ENCODE measurements at regions of chr16 and their contacts with region 1.

Region 1: DNA sequence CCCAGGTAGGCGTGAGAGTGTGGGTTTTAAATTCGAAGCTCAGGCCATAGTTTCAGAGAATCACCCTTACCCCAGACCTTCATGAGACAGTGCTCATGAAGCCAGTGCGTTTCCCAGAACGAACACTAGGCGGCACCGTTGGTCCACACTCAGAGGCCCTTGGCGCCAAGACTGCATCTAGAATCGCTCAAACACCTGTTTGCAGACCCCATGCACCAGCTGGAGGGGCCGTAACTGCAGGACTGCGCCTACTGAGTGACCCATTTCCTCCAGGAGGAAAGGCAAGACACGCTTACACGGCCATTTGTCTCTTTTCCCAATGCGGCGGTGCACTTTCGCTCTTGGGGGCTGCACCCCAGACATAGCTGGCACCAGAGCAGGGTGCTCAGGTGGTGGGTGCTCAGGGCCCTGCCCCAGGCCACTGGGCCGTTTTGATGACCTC is 34.0 kb downstream of the ADGRG5 start:
- DNase-seq: peak; percentile 91
- ATAC-seq: peak; percentile 82
- H3K4me3 Mint-ChIP-seq: no peak overlapping the region
- H3K27ac Mint-ChIP-seq: no peak overlapping the region
- H3K4me1 Mint-ChIP-seq: peaks cover 33% of the 10 kb centered on the region
- H3K27me3 Mint-ChIP-seq: peaks cover 5% of the 10 kb centered on the region

Region 2: DNA sequence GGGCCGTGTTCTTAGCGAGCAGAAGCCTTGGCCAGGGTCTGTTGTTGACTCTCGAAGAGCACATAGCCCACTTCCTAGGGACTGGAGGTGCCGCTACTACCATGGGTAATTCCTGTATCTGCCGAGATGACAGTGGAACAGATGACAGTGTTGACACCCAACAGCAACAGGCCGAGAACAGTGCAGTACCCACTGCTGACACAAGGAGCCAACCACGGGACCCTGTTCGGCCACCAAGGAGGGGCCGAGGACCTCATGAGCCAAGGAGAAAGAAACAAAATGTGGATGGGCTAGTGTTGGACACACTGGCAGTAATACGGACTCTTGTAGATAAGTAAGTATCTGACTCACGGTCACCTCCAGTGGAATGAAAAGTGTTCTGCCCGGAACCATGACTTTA is 371.8 kb before region 1 on chr16:
- CTCF ChIA-PET with region 1: no interaction called
- POLR2A ChIA-PET with region 1: no interaction called
- intact Hi-C with region 1: no loop called
- DNase-seq: peak; percentile 7
- ATAC-seq: no peak
- H3K4me3 Mint-ChIP-seq: no peak overlapping the region
- H3K27ac Mint-ChIP-seq: no peak overlapping the region
- H3K4me1 Mint-ChIP-seq: no peaks in the 10 kb centered on the region
- H3K27me3 Mint-ChIP-seq: no peaks in the 10 kb centered on the region

Region 3: DNA sequence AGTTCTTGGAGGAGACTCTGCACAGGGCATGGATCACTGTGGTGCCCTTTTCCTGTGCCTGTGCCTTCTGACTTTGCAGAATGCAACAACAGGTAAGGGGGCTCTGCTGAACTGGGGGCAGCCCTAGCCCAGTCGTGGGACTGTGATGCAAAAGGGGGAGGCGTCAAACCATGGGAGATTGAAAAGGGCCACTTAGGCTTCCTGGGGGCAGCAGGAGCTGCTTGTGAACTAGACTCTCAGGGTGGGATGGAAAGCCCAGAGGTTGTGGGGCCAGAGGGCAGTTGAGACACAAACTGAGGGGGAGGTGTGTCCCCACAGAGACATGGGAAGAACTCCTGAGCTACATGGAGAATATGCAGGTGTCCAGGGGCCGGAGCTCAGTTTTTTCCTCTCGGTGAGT is 14.4 kb before region 1 on chr16:
- CTCF ChIA-PET with region 1: interaction called, 16 read pairs
- POLR2A ChIA-PET with region 1: no interaction called
- intact Hi-C with region 1: no loop called
- DNase-seq: no peak
- ATAC-seq: no peak
- H3K4me3 Mint-ChIP-seq: no peak overlapping the region
- H3K27ac Mint-ChIP-seq: no peak overlapping the region
- H3K4me1 Mint-ChIP-seq: peaks cover 9% of the 10 kb centered on the region
- H3K27me3 Mint-ChIP-seq: peaks cover 2% of the 10 kb centered on the region

Region 4: DNA sequence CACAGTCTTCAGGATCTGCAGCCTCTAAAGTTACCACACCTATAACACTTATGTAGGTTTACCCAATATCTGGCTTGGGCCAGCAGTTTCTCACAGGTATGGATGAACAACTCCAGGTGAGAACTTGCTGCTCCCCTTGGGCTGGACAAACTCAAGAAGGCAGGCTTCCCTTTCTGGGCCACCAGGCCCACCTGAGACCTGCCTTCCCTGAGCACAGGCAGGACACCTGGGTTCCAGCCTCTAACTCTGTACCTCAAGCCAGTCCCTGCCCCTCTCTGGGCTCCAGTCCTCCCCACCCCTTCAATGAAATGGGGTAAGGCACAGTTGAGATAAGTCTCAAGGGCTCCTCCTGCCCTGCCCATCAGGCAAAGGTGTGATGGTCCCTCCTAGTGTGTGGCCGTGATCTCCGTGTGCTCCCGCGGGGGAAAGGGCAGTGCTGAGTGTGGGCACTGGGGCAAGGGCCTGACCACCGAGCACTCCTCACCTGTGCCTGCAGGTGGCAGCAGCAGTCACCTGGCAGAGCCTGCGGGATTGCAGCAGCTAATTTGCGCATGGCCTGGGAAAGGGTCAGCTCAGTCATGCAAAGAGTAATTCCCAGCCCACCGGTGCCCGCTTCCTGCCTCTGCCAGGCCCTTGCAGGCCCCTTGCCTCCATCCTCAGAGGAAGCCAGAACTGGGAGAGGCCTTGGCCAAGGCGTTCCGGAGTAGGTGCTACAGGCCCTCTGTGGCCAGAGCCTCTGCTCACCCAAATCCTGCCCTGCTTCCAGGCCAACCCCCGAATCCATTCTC is 23.8 kb after region 1 on chr16:
- CTCF ChIA-PET with region 1: interaction called, 24 read pairs
- POLR2A ChIA-PET with region 1: interaction called, 3 read pairs
- intact Hi-C with region 1: loop called in 1 of 2 experiments (anchors 2 kb)
- DNase-seq: peak; percentile 73
- ATAC-seq: peak; percentile 18
- H3K4me3 Mint-ChIP-seq: no peak overlapping the region
- H3K27ac Mint-ChIP-seq: no peak overlapping the region
- H3K4me1 Mint-ChIP-seq: peaks cover 35% of the 10 kb centered on the region
- H3K27me3 Mint-ChIP-seq: no peaks in the 10 kb centered on the region

Region 5: GRCh38 chr16:57639172-57639887 is 62.9 kb after region 1 on chr16:
- CTCF ChIA-PET with region 1: interaction called, 14 read pairs
- POLR2A ChIA-PET with region 1: no interaction called
- intact Hi-C with region 1: no loop called
- DNase-seq: peak; percentile 37
- ATAC-seq: peak; percentile 42
- H3K4me3 Mint-ChIP-seq: no peak overlapping the region
- H3K27ac Mint-ChIP-seq: no peak overlapping the region
- H3K4me1 Mint-ChIP-seq: no peaks in the 10 kb centered on the region
- H3K27me3 Mint-ChIP-seq: peaks cover 10% of the 10 kb centered on the region

Region 6: GRCh38 chr16:57720142-57720575 is 143.7 kb after region 1 on chr16:
- CTCF ChIA-PET with region 1: no interaction called
- POLR2A ChIA-PET with region 1: no interaction called
- intact Hi-C with region 1: loop called (anchors 1 to 5 kb)
- DNase-seq: peak; percentile 74
- ATAC-seq: peak; percentile 80
- H3K4me3 Mint-ChIP-seq: no peak overlapping the region
- H3K27ac Mint-ChIP-seq: no peak overlapping the region
- H3K4me1 Mint-ChIP-seq: no peaks in the 10 kb centered on the region
- H3K27me3 Mint-ChIP-seq: no peaks in the 10 kb centered on the region

Region 7: DNA sequence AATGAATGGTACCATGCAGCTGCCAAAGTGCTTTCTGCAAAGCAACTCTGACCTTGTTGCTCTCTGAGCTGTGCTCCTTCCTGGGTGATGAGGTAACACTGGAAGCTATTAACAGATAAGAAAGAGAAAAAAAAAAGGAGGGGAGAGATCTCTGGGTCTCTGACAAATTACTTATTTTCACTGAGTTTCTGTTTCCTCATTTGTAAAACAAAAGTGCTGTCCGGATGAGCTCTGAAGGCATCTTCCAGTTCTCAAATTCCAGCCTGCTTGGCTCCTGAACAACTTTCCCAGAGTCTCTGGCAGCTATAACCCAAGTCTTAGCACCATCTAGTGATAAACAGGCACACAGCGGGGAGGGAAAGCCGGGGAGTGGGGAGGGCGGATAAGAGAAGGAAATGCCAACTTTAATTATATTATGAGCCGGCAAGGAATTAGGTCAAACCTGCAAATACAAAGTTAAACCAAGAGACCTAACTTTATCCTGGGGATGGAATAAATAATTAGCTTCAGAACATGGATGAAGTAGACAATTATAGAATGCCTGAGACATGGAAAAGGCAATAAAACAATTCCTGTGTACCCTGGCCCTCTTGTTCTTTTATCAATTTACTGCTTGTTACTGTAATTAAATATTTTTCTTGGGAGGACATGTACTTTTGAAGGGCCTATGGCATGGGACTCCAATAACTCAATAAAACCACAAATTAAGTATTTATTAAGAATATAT is 287.1 kb after region 1 on chr16:
- CTCF ChIA-PET with region 1: no interaction called
- POLR2A ChIA-PET with region 1: no interaction called
- intact Hi-C with region 1: loop called in 1 of 2 experiments (anchors 5 kb)
- DNase-seq: peak; percentile 16
- ATAC-seq: no peak
- H3K4me3 Mint-ChIP-seq: no peak overlapping the region
- H3K27ac Mint-ChIP-seq: no peak overlapping the region
- H3K4me1 Mint-ChIP-seq: no peaks in the 10 kb centered on the region
- H3K27me3 Mint-ChIP-seq: peaks cover 13% of the 10 kb centered on the region

Measured in activated CD4-positive, alpha-beta T cell treated with anti-CD3 and anti-CD28 coated beads for 36 hours (primary cell).